ENCODE measurements at regions of chr6 and their contacts with region 1.

Region 1: DNA sequence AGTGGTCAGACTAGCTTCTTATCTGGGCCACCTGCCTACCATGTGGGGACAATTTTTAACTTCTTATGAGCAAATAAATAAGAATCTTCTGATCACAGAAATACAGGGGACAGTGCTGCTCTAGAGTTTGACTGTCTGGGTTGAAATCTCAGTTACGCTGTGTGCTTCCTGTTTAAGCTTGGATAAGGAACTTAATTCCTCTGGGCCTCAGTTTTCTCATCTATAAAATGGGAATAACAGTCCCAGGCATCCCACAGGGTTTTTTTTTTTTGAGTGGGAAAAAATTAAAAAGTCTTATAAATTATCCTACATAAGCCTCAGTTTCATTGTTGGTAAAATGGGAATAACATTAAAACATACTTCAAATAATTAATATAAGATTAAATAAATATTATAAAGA is 340.9 kb downstream of the ESR1 start:
- DNase-seq: no peak
- H3K4me3 ChIP-seq: no peak overlapping the region
- H3K27ac ChIP-seq: no peak overlapping the region
- H3K4me1 ChIP-seq: no peaks in the 10 kb centered on the region
- H3K27me3 ChIP-seq: no peaks in the 10 kb centered on the region
- CTCF ChIP-seq: no peak

Region 2: GRCh38 chr6:152206072-152206818 is 57.8 kb after region 1 on chr6:
- CTCF ChIA-PET with region 1: no interaction called
- POLR2A ChIA-PET with region 1: interaction called, 11 read pairs
- intact Hi-C with region 1: no loop called
- DNase-seq: no peak
- H3K4me3 ChIP-seq: no peak overlapping the region
- H3K27ac ChIP-seq: no peak overlapping the region
- H3K4me1 ChIP-seq: peaks cover 6% of the 10 kb centered on the region; the same call in 1 of the 2 replicates
- H3K27me3 ChIP-seq: no peaks in the 10 kb centered on the region
- CTCF ChIP-seq: peak; percentile 31; the same call in 1 of the 2 replicates